AG04449 (cell line): ENCODE measurements at regions of chr1 and their contacts with region 1.

Region 1: DNA sequence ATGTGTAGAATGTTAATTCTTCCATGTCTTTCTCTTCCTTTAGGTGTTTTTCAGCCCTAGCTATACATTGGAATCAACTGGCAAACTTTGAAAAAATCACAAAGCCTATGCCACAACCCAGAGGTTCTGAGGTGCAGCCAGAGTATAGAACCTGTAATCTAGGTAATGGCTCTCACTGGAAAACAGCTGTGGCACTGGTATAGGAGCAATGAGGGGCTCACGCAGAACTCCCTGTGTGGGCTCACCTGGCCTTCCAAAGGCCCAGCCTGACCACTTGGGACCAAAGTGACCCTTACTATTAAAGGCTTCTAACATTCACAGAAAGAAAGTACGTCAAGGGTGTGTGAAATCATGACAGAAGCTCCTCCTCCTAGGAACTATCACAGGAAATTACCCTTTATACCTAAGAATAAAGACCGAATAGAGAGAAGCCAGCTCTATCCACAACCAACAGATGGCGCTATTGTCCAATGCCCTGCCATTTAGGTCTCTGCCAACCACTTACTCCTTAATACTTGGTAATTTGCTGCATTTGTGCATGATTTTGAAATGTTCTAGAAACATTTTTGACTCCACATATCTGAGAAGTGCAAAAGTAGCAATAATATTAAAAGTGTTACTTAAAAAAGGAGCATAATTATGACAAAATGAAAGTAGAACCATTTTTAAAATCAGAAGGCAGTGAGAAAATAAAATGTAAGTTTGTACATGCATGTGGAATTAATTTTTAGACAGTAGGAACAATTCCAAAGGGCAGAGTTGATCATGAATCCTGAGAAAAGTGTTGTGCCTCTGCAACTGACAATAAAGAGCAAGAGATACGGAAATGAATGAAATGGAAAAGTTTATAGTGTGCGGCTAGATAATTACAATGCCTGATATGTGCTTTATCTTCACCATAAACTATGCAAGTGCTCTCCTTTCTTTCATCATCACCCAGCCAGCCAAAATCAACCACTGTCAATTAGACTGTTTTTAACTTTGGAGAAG is 93.1 kb upstream of the HAO2 start:
- DNase-seq: no peak
- H3K4me3 ChIP-seq: no peak overlapping the region
- CTCF ChIP-seq: peak; percentile 84

Region 2: GRCh38 chr1:119254067-119254720 is 21.2 kb before region 1 on chr1:
- CTCF ChIA-PET with region 1: interaction called, 13 read pairs
- POLR2A ChIA-PET with region 1: no interaction called
- DNase-seq: no peak
- H3K4me3 ChIP-seq: no peak overlapping the region
- CTCF ChIP-seq: no peak

Region 3: GRCh38 chr1:119286587-119287181 is 11.2 kb after region 1 on chr1:
- CTCF ChIA-PET with region 1: interaction called, 16 read pairs
- POLR2A ChIA-PET with region 1: no interaction called
- DNase-seq: no peak
- H3K4me3 ChIP-seq: no peak overlapping the region
- CTCF ChIP-seq: peak; percentile 10

Region 4: DNA sequence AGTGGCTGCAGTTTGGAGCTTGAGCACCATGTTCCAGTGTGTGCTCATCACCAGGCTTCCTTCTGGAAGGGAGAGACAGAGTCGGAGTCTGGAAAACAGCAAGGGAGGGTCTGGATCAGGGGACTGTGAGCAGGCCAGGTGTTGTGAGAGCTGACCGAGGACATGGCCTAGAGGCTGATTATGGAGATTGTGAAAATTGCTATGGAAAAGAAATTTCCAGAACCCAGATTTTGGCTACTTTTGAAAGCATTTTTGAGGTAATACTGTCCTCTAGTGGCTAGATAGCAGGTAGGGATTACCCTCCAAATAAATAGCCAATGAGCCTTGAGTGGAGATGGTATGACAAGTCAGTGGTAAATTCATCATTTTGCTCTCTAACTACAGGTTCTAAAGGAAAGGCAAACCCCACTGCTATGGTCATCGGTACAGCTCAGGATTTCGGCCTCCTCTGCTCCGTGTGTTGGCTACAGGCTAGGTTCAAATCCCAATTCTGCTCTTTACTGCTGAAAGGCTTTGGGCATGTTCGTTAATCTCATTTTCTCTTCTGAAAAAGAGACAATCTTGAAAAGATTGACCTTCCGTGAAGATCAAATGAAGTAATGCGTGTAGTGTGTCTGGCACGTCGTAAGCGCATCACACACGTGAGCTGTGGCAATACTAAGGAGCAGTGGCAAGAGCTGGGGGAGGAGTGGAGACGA is 92.1 kb after region 1 on chr1:
- CTCF ChIA-PET with region 1: interaction called, 99 read pairs
- POLR2A ChIA-PET with region 1: no interaction called
- DNase-seq: no peak
- H3K4me3 ChIP-seq: no peak overlapping the region
- CTCF ChIP-seq: peak; percentile 75

Region 5: GRCh38 chr1:119448127-119448511 is 172.7 kb after region 1 on chr1:
- CTCF ChIA-PET with region 1: no interaction called
- POLR2A ChIA-PET with region 1: no interaction called
- DNase-seq: no peak
- H3K4me3 ChIP-seq: no peak overlapping the region
- CTCF ChIP-seq: no peak